Right cardiac atrium (tissue), 5 donors: ENCODE measurements at regions of chr20 and their contacts with region 1.

Region 1: DNA sequence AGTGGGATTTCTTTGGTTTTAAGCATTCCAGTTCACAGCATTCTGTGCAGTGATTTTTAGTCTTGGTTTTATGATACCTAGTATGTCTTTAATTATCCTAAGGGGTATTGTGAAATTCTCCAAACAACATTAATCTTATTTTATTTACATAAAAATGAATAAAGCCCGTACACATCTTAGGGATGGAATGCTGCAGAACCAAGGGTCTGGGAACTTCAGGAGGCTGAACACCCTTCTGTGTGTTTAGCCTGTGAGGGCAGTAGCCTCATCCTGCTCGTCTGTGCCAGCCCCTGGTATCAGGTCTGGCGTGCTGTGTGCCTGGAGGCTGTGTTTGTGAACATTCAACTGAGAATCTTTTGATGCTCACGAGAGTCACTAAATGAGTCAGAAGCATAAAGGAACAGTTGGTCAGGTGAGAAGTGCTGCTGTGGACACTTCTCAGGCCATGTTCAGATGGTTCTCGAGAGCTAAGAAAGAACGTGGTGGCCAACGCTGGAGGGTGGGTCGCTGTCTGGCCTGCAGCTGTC is 25.2 kb upstream of the C20orf204 start:
- DNase-seq: no peak
- ATAC-seq: no peak
- H3K4me3 ChIP-seq: no peak overlapping the region
- H3K27ac ChIP-seq: no peak overlapping the region
- H3K4me1 ChIP-seq: no peaks in the 10 kb centered on the region
- H3K27me3 ChIP-seq: no peaks in the 10 kb centered on the region

Region 2: GRCh38 chr20:63587776-63588591 is 422.8 kb before region 1 on chr20:
- intact Hi-C with region 1: no loop called
- DNase-seq: peak in 1 of 3 donors; percentile 48
- ATAC-seq: no peak
- H3K4me3 ChIP-seq: no peak overlapping the region
- H3K27ac ChIP-seq: no peak overlapping the region
- H3K4me1 ChIP-seq: peaks cover 4% of the 10 kb centered on the region
- H3K27me3 ChIP-seq: no peaks in the 10 kb centered on the region

Region 3: DNA sequence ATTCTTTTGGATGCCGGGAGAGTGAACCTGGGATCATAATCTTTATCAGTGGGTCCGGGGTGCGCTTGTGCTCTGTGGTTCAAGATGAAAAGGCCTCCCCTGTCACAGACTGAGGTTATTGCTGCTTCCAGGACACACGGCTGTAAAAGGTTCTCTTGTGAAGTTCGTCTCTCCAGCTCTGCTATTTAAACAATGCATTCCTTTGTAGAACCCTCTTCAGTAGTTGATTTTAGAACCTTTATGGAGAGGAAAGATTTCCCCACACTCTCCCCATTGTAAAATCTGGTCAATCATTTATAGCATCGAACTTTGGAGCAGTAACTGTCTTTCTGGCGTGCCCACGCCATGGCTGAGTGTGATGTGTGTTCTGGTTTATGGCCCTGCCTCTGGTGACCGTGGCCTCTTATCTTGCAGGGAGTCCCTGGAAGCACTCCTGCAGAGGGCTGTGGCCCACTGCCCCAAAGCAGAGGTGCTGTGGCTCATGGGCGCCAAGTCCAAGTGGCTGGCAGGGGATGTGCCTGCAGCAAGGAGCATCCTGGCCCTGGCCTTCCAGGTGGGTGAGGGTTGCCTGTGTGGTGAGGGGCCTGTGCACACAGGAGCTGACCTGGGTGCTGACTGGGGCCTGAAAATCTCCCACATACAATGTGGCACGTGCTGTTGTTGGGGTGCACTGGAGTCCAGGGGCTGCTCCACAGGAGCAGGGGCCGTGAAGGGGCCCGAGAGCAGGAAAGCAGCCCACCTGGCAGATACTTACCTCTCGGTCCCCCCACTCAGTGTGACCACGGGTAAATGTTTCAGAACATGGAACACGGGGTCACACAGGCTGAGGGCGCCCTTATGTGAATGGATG is 13.6 kb after region 1 on chr20:
- intact Hi-C with region 1: loop called in 1 of 4 experiments (anchors 1 kb)
- DNase-seq: no peak
- ATAC-seq: no peak
- H3K4me3 ChIP-seq: no peak overlapping the region
- H3K27ac ChIP-seq: no peak overlapping the region
- H3K4me1 ChIP-seq: no peaks in the 10 kb centered on the region
- H3K27me3 ChIP-seq: no peaks in the 10 kb centered on the region